Motor neuron (in vitro differentiated cells): ENCODE measurements at regions of chr1 and their contacts with region 1.

Region 1: DNA sequence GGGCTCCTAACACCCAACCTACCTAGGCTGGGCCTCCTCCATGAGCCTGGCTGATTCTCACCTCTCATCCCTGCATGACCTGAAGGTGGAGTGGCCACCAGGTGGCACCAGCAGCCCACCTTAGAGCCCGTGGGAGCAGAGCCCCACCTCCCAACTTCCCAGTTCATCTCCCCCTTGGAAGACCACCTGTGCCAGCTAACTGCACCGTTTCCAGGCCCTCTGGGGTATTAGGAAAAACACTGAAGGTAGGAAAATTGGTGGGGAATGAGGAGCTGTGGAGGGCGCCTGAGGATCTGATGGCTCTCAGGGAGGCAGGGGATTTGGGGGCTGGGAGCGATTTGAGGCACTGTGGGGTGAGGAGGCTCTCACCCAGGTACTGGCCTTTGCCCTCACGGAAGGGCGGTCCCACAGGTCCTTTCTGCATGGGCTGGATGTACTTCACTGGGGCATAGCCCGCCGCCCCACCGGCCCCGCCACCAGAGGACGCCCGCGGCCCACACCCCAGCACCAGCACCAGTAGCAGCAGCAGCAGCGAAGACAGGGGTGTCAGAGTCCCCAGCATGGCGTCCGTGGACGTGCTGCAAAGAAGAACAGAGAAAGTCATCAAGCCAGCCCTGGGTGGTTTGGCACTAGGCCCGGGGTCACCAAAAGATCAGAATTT is 11.1 kb downstream of the ADPRS start:
- ATAC-seq: peak; percentile 68 to 91 (median 76)
- H3K4me3 ChIP-seq: no peak overlapping the region
- H3K27ac ChIP-seq: no peak overlapping the region
- H3K4me1 ChIP-seq: peaks cover 0 to 5% of the 10 kb centered on the region in 2 donors

Region 2: GRCh38 chr1:36187800-36188593 is 88.2 kb after region 1 on chr1:
- in situ Hi-C with region 1: loop called in 2 of 9 experiments (anchors 10 kb)
- ATAC-seq: peak; percentile 94 to 98 (median 96)
- H3K4me3 ChIP-seq: no peak overlapping the region
- H3K27ac ChIP-seq: no peak overlapping the region
- H3K4me1 ChIP-seq: peaks cover 0 to 5% of the 10 kb centered on the region in 2 donors

Region 3: GRCh38 chr1:36285448-36286101 is 185.8 kb after region 1 on chr1:
- in situ Hi-C with region 1: loop called in 1 of 9 experiments (anchors 25 kb)
- ATAC-seq: peak; percentile 54 to 96 (median 70)
- H3K4me3 ChIP-seq: no peak overlapping the region
- H3K27ac ChIP-seq: no peak overlapping the region
- H3K4me1 ChIP-seq: no peaks in the 10 kb centered on the region

Region 4: GRCh38 chr1:36420836-36421664 is 321.2 kb after region 1 on chr1:
- in situ Hi-C with region 1: loop called in 4 of 9 experiments (anchors 10 to 25 kb)
- ATAC-seq: peak; percentile 88 to 100 (median 96)
- H3K4me3 ChIP-seq: no peak overlapping the region
- H3K27ac ChIP-seq: no peak overlapping the region
- H3K4me1 ChIP-seq: peaks cover 6 to 12% of the 10 kb centered on the region in 2 donors